Spleen (tissue), 13 donors: ENCODE measurements at regions of chr9 and their contacts with region 1.

Region 1: DNA sequence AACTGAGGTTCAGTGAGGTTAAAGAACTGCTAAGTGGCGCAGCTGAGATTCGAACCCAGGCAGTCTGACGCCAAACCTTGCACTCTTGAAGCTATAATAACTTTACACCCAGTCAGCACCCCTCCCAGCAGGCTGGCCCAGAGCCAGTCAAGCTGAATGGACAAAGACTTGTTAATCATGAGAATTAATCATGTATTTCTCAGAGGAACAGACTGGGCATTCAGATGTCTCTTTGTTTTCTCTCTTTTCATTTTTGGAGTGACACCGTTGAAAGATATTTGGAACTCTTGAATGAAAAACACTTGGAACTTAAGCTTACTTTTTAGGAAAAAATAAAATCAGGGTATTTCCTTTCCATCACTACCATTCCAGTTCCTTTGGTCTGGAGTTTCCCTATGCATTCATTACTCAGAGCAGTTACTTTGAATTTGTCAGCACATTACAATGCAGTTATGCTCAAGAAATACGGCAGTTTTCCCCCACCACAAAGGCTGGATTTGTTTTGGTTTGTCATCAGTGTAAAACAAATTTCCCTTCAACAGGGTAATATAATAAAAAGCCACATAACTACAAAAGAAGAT is 22.6 kb upstream of the MAMDC2 start:
- DNase-seq: no peak
- H3K4me3 ChIP-seq: no peak overlapping the region
- H3K27ac ChIP-seq: no peak overlapping the region
- H3K4me1 ChIP-seq: no peaks in the 10 kb centered on the region
- H3K27me3 ChIP-seq: peaks cover 0 to 4% (median 0%) of the 10 kb centered on the region in 7 donors
- CTCF ChIP-seq: no peak
- POLR2A ChIP-seq: no peak

Region 2: GRCh38 chr9:70100362-70100761 is 79.3 kb after region 1 on chr9:
- intact Hi-C with region 1: loop called (anchors 10 kb)
- DNase-seq: no peak
- H3K4me3 ChIP-seq: no peak overlapping the region
- H3K27ac ChIP-seq: no peak overlapping the region
- H3K4me1 ChIP-seq: peaks cover 0 to 3% (median 0%) of the 10 kb centered on the region in 6 donors
- H3K27me3 ChIP-seq: no peaks in the 10 kb centered on the region
- CTCF ChIP-seq: no peak
- POLR2A ChIP-seq: no peak